ENCODE measurements at regions of chr6 and their contacts with region 1.

Region 1: DNA sequence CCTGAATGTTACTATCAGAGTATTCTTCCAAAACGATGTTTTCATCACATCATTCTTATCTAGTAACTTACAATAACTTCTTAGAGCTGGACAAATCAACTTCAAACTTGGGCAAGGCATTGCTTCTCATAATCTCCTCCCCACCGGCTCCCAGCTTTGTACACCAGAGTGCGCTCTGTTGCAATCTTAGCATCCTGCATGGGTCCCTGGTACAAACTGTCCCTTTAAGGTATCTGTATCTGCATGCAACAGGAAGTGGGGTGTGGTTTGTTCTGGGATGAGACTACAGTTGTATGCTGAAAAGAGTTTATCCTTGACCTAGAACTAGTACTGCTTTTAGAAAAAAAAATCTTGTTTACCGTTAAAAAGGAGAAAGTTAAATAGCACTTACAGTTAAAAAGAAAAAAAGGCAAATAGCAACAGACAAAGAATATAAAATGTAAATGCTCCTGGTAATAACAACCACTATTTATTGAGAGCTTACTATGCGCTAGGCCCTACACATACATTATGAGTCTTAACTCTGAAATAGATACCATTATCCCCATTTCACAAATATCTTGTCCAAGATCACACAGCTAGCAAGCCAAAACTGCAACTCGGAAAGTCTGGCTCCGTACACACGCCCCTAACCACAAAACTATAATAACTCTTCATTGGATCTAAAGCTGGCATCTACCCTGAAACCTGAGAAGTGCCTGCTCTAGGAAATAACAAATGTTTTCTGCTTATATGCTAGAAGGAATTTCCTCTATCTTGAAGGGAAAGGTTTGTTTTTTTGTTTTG is 9.8 kb upstream of the HECA start:
- DNase-seq: peak; percentile 93
- ATAC-seq: peak; percentile 98
- H3K4me3 Mint-ChIP-seq: peak overlapping the region; percentile 60
- H3K27ac Mint-ChIP-seq: peak overlapping the region; percentile 95
- H3K4me1 Mint-ChIP-seq: peaks cover 39% of the 10 kb centered on the region
- H3K27me3 Mint-ChIP-seq: no peaks in the 10 kb centered on the region

Region 2: DNA sequence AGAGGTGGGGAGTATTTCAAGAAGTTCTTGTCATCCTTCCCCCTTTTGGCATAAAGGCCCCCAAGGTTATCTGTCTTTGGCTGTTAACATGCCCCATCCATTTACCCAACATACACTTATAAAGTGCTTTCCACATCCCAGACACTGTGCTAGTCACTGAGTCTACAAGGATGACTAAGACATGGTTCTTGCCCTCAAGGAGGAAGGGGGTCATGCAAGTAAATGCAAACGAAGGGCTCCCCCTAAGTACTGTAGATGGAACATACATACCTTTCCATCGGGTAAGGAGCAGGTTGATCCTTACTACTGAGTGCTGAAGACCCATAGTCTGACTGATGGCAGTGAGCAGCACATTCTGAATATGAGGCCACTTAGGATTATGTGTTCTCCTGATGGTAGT is 48.1 kb after region 1 on chr6:
- CTCF ChIA-PET with region 1: interaction called, 13 read pairs
- DNase-seq: no peak
- ATAC-seq: peak; percentile 90
- H3K4me3 Mint-ChIP-seq: no peak overlapping the region
- H3K27ac Mint-ChIP-seq: peak overlapping the region; percentile 70
- H3K4me1 Mint-ChIP-seq: peaks cover 84% of the 10 kb centered on the region
- H3K27me3 Mint-ChIP-seq: no peaks in the 10 kb centered on the region

Measured in activated CD8-positive, alpha-beta memory T cell treated with anti-CD3 and anti-CD28 coated beads, Interleukin-2, amount 10 ng/mL, durations not matched to agents 7 days and 5 days (primary cell).